Aorta (tissue), 5 donors: ENCODE measurements at regions of chr14 and their contacts with region 1.

Region 1: DNA sequence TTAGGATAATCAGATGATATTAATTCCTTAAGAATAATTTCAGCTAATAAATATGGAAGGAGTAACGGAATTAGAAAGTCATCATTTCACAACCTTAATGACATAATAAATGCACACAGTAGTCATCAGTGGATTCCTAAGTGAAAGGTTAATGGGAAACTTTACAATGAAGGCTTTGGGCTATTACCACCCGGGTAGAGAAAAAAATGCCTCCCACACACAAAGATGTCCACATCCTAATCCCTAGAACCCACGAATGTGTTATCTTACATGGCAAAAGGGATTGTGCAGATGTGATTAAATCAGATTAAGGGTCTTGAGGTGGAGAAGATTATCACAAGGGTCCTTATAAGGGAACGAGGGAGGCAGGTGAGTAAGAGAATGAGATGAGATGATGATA is 5.6 kb downstream of the TMED10 start:
- DNase-seq: no peak
- ATAC-seq: no peak
- H3K4me3 ChIP-seq: no peak overlapping the region
- H3K27ac ChIP-seq: no peak overlapping the region
- H3K4me1 ChIP-seq: peaks cover 2 to 6% of the 10 kb centered on the region in 2 donors
- H3K27me3 ChIP-seq: no peaks in the 10 kb centered on the region

Region 2: DNA sequence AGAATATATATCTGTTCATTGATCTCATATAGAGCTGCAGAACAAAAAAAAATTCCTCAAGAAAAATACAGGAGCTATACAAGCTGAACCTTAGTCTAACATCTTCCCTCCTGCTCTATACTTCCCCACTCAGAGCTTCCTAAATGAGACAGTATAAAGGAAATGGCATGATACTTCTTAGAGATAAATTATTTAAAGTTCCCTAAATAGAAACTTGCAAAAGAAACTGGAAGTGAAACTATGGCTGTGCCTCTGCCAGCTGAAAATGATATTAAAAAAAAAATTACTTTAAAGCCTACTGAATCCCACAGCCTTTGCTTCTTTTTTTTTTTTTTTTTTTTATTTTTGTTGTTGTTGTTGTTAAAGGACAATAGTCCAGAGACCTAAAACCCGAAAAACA is 32.3 kb before region 1 on chr14:
- intact Hi-C with region 1: loop called (anchors 5 kb)
- DNase-seq: no peak
- ATAC-seq: no peak
- H3K4me3 ChIP-seq: no peak overlapping the region
- H3K27ac ChIP-seq: no peak overlapping the region
- H3K4me1 ChIP-seq: no peaks in the 10 kb centered on the region
- H3K27me3 ChIP-seq: no peaks in the 10 kb centered on the region

Region 3: DNA sequence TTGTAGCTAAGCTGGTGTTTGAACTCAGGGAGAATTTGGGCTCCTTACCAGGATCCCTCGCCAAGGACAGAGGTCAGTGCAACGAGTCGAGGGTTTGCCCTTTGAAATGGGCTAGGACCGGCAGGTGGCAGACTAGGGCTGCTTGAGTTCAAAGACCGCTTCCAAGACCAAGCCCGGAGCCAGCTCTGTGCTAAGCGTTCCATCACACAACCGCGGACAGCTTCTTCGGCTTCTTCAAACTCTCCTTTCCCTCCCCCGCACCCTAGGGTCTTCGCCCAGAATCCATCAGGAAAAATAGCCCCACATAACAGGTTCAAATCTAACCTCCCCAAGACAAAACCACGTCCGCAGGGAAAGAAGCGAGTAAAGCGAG is 406.9 kb after region 1 on chr14:
- intact Hi-C with region 1: no loop called
- DNase-seq: peak; percentile 91 to 93
- ATAC-seq: peak; percentile 93
- H3K4me3 ChIP-seq: peak overlapping the region; percentile 56 to 81
- H3K27ac ChIP-seq: peak overlapping the region in 1 of 2 donors; percentile 56
- H3K4me1 ChIP-seq: peaks cover 0 to 2% of the 10 kb centered on the region in 2 donors
- H3K27me3 ChIP-seq: no peaks in the 10 kb centered on the region